ENCODE measurements at regions of chr4 and their contacts with region 1.

Region 1: GRCh38 chr4:48762408-48762807 is 17.7 kb downstream of the FRYL start:
- DNase-seq: no peak
- ATAC-seq: no peak
- H3K4me3 ChIP-seq: no peak overlapping the region
- H3K27ac ChIP-seq: no peak overlapping the region
- H3K4me1 ChIP-seq: 0 out of 2 replicates have a peak, but pooled peaks cover 3% of the 10 kb centered on the region
- H3K27me3 ChIP-seq: no peaks in the 10 kb centered on the region
- CTCF ChIP-seq: no peak
- EP300 ChIP-seq: no peak
- POLR2A ChIP-seq: no peak
- RAD21 ChIP-seq: no peak

Region 2: GRCh38 chr4:48774760-48775710 is 12.6 kb after region 1 on chr4:
- CTCF ChIA-PET with region 1: no interaction called
- POLR2A ChIA-PET with region 1: interaction called, 3 read pairs
- RAD21 ChIA-PET with region 1: no interaction called
- SMC1A ChIA-PET with region 1: interaction called, 19 read pairs
- in situ Hi-C with region 1: no loop called
- intact Hi-C with region 1: no loop called
- DNase-seq: no peak
- ATAC-seq: no peak
- H3K4me3 ChIP-seq: peak overlapping the region; percentile 20; the same call in 1 of the 2 replicates
- H3K27ac ChIP-seq: no peak overlapping the region
- H3K4me1 ChIP-seq: peaks cover 2% of the 10 kb centered on the region; the same call in 1 of the 2 replicates
- H3K27me3 ChIP-seq: no peaks in the 10 kb centered on the region
- CTCF ChIP-seq: no peak
- EP300 ChIP-seq: no peak
- POLR2A ChIP-seq: no peak
- RAD21 ChIP-seq: no peak

Measured in GM12878 (cell line).